ENCODE measurements at regions of chr10 and their contacts with region 1.

Region 1: DNA sequence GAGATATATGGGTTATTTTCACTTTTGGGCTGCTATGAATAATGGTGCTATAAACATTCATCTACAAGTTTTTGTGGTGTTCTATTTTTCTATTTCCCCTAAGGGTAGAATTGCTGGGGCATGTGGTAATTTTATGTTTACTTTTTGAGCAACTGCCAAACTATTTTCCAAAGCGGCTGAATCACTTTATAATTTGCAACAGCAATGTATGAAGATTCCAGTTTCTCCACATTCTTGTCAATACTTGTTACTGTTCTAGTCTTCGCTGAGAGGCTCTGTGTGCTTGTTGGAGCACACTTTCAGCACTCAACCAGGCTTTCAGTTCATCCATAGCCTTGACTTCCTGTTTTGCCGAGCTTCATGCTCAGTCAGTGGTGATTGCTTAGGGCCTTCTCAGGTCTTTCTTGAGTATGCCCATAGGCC is 39.0 kb downstream of the ADK start:
- DNase-seq: no peak
- H3K4me3 ChIP-seq: no peak overlapping the region
- H3K27ac ChIP-seq: no peak overlapping the region
- H3K4me1 ChIP-seq: peaks cover 0 to 3% (median 1%) of the 10 kb centered on the region in 4 experiments; a peak in 2 of 7 replicates
- H3K27me3 ChIP-seq: no peaks in the 10 kb centered on the region
- CTCF ChIP-seq: no peak
- EP300 ChIP-seq: no peak
- POLR2A ChIP-seq: no peak
- RAD21 ChIP-seq: no peak

Region 2: DNA sequence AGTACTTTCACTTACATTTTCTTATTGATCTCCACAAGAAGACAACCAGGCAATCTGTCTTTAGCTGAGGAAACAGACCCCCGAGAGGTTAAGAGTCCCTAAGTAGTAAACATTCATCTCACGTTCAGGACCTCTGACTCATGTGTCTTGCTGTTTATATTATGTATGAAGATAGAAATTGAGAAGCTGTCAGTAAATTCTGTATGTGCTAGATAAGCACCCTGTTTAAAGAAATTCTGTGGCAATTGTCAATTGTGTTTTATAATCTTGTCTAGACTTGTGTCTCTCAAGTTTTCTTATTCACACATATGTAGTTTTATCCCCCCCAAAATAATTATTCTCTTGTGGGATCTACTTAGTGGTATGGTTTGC is 24.5 kb before region 1 on chr10:
- CTCF ChIA-PET with region 1: no interaction called
- POLR2A ChIA-PET with region 1: no interaction called
- DNase-seq: no peak
- H3K4me3 ChIP-seq: no peak overlapping the region
- H3K27ac ChIP-seq: no peak overlapping the region
- H3K4me1 ChIP-seq: no peaks in the 10 kb centered on the region; a peak in 1 of 7 replicates
- H3K27me3 ChIP-seq: no peaks in the 10 kb centered on the region
- CTCF ChIP-seq: no peak
- EP300 ChIP-seq: no peak
- POLR2A ChIP-seq: no peak
- RAD21 ChIP-seq: no peak

Region 3: DNA sequence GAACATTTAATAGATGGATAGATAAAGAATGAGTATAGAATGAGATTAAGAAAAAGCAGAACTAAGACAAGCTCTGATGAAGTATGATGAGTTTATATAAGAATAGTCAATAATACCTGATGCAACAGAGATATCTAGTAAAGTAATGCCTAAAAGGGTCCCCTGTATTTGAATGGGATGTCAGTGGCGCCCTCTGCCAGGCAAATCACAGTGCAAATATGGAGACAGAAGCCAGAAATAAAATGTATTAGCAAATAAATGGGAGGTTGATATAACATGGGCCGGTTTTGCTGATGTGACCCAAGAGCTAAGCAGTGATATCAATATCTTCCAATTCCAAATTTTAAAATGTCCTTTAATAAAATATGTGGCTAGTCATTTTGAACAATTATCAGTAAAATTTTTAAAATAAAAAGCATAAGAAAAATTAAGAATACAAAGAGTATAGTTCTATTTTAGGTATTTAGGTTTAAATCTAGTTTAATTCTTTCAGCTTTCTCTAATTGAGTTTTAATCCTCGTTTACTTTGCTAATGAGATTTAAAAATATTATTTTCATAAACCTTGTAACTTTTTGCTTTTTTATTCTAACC is 23.7 kb after region 1 on chr10:
- CTCF ChIA-PET with region 1: interaction called, 10 read pairs
- POLR2A ChIA-PET with region 1: interaction called, 3 read pairs
- DNase-seq: no peak
- H3K4me3 ChIP-seq: no peak overlapping the region
- H3K27ac ChIP-seq: no peak overlapping the region
- H3K4me1 ChIP-seq: no peaks in the 10 kb centered on the region; a peak in 1 of 7 replicates
- H3K27me3 ChIP-seq: no peaks in the 10 kb centered on the region
- CTCF ChIP-seq: peak in 2 of 3 experiments; percentile 41 to 57; a peak in 3 of 4 replicates
- EP300 ChIP-seq: no peak
- POLR2A ChIP-seq: no peak
- RAD21 ChIP-seq: peak; percentile 41 to 56

Measured in H1 (cell line).